Aorta (tissue), 5 donors: ENCODE measurements at regions of chr4 and their contacts with region 1.

Region 1: DNA sequence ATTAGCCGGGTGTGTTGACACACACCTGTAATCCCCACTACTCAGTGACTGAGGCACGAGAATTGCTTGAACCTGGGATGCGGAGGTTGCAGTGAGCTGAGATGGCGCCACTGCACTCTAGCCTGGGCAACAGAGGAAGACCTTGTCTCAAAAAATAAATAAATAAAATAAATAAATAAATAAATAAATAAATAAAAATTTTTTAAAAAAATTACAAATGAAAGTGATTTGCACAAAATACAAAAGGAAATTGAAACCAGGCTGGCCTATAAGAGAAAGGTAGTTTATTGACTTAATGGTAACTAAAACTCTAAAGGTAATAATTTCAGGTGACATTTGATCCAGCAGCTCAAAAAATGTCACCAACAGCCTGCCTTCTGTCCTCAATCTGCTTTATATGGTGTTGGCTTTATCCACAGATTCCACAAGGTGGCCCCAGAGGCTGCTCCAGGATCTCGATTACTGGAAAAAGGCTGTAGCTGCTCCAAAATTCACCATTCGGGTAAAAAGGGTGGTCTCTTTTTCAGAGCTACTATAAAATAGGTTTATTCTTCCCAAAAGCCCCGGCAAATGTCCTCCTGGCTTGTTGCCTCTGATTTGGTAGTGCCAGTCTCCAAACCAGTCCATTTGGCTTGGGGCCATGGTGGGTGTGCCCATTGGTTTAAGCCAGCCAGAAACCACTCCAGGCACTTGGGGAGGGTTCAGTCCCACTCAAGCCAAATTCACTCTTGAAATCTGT is 61.4 kb upstream of the TRIM2 start:
- DNase-seq: peak; percentile 84 to 90
- ATAC-seq: peak; percentile 81
- H3K4me3 ChIP-seq: peak overlapping the region in 1 of 2 donors; percentile 11
- H3K27ac ChIP-seq: no peak overlapping the region
- H3K4me1 ChIP-seq: no peaks in the 10 kb centered on the region
- H3K27me3 ChIP-seq: no peaks in the 10 kb centered on the region

Region 2: DNA sequence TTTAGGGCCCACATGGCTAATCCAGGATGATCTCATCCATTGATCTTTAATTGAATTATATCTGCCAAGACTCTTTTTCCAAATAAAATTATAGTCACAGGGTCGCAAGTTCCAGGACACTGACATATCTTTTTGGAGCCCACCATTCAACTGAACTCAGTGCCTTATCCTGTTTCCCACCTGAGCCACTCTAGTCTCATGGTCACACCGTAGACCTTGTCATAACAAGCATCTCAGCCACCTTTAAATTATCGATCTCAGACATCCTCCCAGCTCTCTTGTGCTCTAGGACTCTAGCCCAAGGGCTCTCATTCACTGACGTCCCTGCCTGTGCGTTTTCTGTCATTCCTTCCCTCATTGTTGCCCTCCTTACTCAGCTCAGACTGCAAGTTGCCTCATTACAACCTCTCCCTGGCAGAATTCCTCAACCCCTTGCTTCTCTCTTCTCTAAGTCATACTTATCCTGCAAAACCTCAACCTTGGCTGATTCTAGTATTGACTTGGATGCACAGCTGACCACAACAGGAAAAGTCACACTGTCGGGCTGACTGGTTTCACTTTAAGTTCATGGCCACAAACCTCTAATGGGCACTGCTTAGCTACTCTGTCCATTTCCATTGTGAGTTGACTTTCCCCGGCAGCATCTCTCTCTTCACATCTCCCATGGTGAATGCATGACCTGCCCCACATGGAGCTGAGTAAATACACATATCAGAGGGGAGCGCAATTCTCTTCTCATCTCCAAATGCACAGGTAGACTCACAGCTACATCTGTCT is 29.6 kb before region 1 on chr4:
- intact Hi-C with region 1: no loop called
- DNase-seq: no peak
- ATAC-seq: no peak
- H3K4me3 ChIP-seq: no peak overlapping the region
- H3K27ac ChIP-seq: no peak overlapping the region
- H3K4me1 ChIP-seq: peaks cover 0 to 3% of the 10 kb centered on the region in 2 donors
- H3K27me3 ChIP-seq: no peaks in the 10 kb centered on the region

Region 3: GRCh38 chr4:153204247-153205027 is 61.6 kb after region 1 on chr4 and contains the start of gene TRIM2:
- intact Hi-C with region 1: loop called in 1 of 2 experiments (anchors 5 kb)
- DNase-seq: peak in 1 of 2 donors; percentile 58
- ATAC-seq: peak; percentile 78
- H3K4me3 ChIP-seq: no peak within 1 kb of the TSS
- H3K27ac ChIP-seq: no peak within 1 kb of the TSS
- H3K4me1 ChIP-seq: no peaks in the 10 kb centered on the region
- H3K27me3 ChIP-seq: no peaks in the 10 kb centered on the region
- total RNA-seq, gene TRIM2: 27.6 to 53.4 TPM

Region 4: GRCh38 chr4:153249199-153250041 is 106.6 kb after region 1 on chr4:
- intact Hi-C with region 1: no loop called
- DNase-seq: peak; percentile 84 to 92
- ATAC-seq: peak; percentile 90
- H3K4me3 ChIP-seq: peak overlapping the region; percentile 23 to 82
- H3K27ac ChIP-seq: no peak overlapping the region
- H3K4me1 ChIP-seq: peaks cover 0 to 3% of the 10 kb centered on the region in 2 donors
- H3K27me3 ChIP-seq: no peaks in the 10 kb centered on the region

Region 5: GRCh38 chr4:153318696-153319320 is 175.9 kb after region 1 on chr4:
- intact Hi-C with region 1: loop called (anchors 1 to 2 kb)
- DNase-seq: no peak
- ATAC-seq: peak; percentile 65
- H3K4me3 ChIP-seq: no peak overlapping the region
- H3K27ac ChIP-seq: no peak overlapping the region
- H3K4me1 ChIP-seq: no peaks in the 10 kb centered on the region
- H3K27me3 ChIP-seq: no peaks in the 10 kb centered on the region

Region 6: DNA sequence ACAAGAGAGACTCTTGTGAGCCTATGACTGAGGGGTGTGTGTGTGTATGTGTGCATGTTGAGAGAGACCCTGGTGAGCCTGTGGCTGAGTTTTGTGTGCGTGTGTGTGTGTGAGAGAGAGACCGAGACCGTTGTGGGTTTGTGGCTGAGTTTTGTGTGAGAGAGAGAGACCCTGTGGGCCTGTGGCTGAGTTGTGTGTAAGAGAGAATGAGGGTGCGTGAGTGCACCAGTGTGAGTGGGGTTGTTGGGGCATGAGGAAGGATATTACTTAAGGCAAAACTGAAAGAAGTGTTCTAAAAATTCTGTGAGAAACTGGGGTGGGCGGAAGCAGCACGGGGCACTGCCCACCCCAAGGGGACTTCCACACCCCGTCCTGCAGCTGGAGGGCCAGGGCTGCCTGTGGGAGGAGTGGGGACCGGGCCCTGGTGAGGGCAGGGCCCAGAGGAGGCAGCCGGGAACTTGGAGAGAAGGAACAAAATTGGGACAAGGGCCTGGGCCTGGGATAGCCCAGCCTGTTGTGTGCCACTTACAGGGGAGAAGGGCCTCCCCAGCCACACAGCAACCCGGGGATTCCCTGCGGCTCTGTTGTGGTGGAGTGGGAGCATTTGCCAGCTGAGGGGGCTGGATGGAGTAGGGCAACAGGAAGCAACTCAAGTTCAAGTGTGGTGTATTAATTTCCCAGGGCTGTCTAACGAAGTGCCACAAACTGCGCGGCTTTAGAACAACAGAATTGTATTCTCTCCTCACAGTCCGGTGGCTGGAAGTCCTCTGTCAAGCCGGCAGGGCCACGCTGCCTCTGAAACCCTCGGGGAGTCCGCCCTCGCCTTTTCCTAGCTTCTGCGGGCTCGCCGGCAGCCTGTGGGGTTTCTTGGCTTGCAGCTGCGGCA is 345.4 kb after region 1 on chr4:
- intact Hi-C with region 1: no loop called
- DNase-seq: peak in 1 of 2 donors; percentile 62
- ATAC-seq: peak; percentile 67
- H3K4me3 ChIP-seq: no peak overlapping the region
- H3K27ac ChIP-seq: peak overlapping the region; percentile 36 to 80
- H3K4me1 ChIP-seq: peaks cover 0 to 6% of the 10 kb centered on the region in 2 donors
- H3K27me3 ChIP-seq: no peaks in the 10 kb centered on the region